Activated CD4-positive, alpha-beta memory T cell treated with anti-CD3 and anti-CD28 coated beads for 36 hours (primary cell): ENCODE measurements at regions of chr13 and their contacts with region 1.

Region 1: DNA sequence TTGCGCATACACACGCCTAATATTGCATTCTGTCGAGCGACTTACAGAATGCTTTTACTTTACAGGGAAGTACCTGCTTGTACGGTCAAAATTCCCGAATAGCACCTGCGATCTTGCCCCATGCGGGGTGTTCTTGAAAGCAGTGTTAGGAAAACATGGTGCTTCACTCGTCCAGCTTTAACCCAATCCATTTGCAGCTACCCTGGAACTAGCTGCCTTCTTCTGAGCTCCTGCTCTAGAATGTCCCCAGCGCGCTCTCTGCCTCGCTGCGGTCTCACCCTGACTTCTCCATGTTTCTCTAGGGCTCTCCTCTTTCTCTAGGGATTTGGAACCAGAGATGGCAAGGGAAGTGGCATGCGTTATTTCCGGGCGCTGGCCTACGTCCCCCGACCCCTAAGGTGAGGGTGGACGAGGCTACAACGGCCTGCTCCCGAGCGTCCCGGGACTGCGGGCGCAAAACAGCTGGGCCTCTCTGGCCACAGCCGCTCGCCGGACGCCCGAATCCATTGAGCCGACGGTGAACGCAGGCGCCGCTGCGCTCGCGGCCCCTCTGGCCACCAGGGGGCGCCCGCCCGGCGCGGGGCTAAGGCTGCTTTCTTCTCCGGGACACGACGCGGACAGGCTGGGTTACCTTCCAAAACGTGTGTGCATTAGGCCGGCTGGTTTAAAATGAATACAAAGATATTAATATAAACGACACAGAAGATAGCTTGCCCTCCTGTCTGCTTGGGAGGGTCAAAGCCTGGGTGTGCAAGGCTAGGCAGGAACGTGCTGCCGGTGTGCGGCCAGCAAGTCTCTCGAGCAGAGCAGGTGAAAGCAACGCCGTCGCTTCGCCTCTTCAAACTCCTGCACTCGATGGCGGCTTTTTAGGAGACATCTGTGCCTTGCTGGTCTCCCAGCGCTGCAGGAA is 1.8 kb upstream of the SPRY2 start:
- DNase-seq: peak; percentile 75
- H3K4me3 Mint-ChIP-seq: peak overlapping the region; percentile 64
- H3K27ac Mint-ChIP-seq: no peak overlapping the region
- H3K4me1 Mint-ChIP-seq: peaks cover 12% of the 10 kb centered on the region
- H3K27me3 Mint-ChIP-seq: peaks cover 38% of the 10 kb centered on the region

Region 2: GRCh38 chr13:79735228-79735627 is 607.5 kb before region 1 on chr13:
- CTCF ChIA-PET with region 1: no interaction called
- POLR2A ChIA-PET with region 1: no interaction called
- intact Hi-C with region 1: no loop called
- DNase-seq: no peak
- H3K4me3 Mint-ChIP-seq: no peak overlapping the region
- H3K27ac Mint-ChIP-seq: no peak overlapping the region
- H3K4me1 Mint-ChIP-seq: no peaks in the 10 kb centered on the region
- H3K27me3 Mint-ChIP-seq: no peaks in the 10 kb centered on the region

Region 3: DNA sequence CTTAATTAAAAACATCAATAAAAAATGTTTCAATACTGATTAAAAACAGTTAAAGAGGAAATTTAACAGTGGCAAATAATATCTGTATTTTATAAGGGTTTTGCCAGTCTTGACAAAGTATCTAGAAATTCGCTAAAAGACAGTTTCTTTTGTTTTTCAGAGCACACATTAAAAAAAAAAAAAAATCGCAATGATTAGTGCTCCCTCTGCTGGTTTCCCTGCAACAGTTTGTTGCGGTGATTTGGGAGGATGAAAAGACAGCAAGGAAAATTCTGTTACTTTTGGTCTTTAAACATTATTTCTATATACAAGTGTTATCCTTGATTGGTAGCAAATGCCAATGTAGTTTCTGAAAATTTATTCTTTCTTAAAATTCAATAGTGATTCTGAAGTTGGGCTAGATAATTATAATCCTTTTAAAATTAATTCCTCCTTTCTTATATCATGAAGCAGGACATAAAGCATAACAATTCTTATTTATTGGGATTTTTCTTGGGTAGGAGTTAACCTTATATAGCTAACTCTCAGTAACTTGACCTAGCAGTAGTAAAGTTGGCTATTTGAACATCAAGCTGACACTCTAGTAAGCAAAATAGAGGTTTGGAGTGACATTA is 21.3 kb after region 1 on chr13:
- CTCF ChIA-PET with region 1: interaction called, 9 read pairs
- POLR2A ChIA-PET with region 1: no interaction called
- intact Hi-C with region 1: loop called (anchors 2 kb)
- DNase-seq: no peak
- H3K4me3 Mint-ChIP-seq: no peak overlapping the region
- H3K27ac Mint-ChIP-seq: no peak overlapping the region
- H3K4me1 Mint-ChIP-seq: no peaks in the 10 kb centered on the region
- H3K27me3 Mint-ChIP-seq: peaks cover 1% of the 10 kb centered on the region

Region 4: DNA sequence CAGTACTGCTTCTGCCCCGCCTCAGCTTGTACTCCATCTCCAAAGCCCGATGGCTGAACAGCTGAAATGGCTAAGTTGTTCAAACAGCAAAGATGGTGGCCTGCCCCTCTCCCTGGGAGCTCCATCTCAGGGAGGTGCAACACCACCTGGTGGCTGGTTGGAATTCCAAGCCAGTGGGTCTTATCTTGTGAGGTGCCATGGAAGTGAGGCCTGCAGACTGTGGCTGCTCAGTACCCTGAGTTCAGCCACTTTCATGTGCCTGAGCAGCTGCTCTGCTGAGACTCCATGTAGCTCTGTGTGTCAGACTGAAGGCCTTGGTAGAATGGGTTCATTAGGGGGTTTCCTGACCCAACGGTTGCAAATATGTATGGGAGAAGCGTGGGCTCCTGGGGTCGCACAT is 65.5 kb after region 1 on chr13:
- CTCF ChIA-PET with region 1: no interaction called
- POLR2A ChIA-PET with region 1: no interaction called
- intact Hi-C with region 1: loop called (anchors 5 kb)
- DNase-seq: no peak
- H3K4me3 Mint-ChIP-seq: no peak overlapping the region
- H3K27ac Mint-ChIP-seq: no peak overlapping the region
- H3K4me1 Mint-ChIP-seq: no peaks in the 10 kb centered on the region
- H3K27me3 Mint-ChIP-seq: no peaks in the 10 kb centered on the region

Region 5: GRCh38 chr13:81017513-81018152 is 674.9 kb after region 1 on chr13:
- CTCF ChIA-PET with region 1: interaction called, 3 read pairs
- POLR2A ChIA-PET with region 1: no interaction called
- intact Hi-C with region 1: loop called (anchors 5 kb)
- DNase-seq: no peak
- H3K4me3 Mint-ChIP-seq: no peak overlapping the region
- H3K27ac Mint-ChIP-seq: no peak overlapping the region
- H3K4me1 Mint-ChIP-seq: no peaks in the 10 kb centered on the region
- H3K27me3 Mint-ChIP-seq: no peaks in the 10 kb centered on the region